Naive thymus-derived CD4-positive, alpha-beta T cell (primary cell): ENCODE measurements at regions of chr16 and their contacts with region 1.

Region 1: DNA sequence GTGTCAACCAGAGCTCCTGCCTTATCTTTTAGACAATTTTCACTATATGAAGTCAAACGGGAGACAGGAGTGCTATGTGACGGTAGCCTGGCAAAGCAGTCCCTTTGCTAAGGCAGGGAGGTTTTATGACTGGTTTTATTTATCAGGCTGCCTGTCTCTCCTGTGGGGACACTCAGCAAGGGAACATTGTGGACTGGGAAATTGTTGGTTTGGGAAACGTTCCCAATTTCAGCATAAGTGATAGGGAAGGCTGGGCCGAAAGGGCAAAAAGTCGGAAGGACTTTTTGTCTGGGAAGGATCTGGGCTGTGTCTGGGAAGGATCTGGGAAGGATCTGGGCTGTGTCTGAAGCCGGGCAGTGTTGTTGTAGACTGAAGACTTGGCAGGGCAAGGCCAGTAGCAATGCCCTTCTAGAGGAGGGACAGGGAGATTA is 211.2 kb downstream of the PARN start:
- DNase-seq: no peak
- ATAC-seq: no peak
- H3K4me3 ChIP-seq: no peak overlapping the region
- H3K4me3 Mint-ChIP-seq: no peak overlapping the region
- H3K27ac ChIP-seq: no peak overlapping the region
- H3K27ac Mint-ChIP-seq: no peak overlapping the region
- H3K4me1 ChIP-seq: no peaks in the 10 kb centered on the region
- H3K4me1 Mint-ChIP-seq: peaks cover 0 to 3% (median 0%) of the 10 kb centered on the region in 7 donors
- H3K27me3 ChIP-seq: no peaks in the 10 kb centered on the region
- H3K27me3 Mint-ChIP-seq: no peaks in the 10 kb centered on the region

Region 2: DNA sequence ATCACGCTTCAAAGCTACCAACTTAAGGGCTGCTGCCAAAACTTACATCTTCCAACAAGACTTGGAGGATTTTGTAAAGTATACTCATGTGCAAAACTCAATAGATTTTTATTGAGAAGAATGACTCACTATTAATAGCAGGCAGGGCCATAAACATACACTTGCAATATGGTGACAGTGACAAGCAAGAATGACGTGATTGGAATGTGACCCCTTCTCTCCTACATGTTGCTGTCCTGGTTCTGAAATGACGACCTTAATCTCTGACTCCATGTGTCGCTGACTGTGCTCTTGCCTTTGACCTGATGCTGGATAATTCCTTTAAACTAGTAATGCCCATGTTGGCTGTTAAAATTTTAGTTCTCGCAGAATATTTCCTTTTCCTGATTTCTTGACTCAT is 36.8 kb after region 1 on chr16:
- CTCF ChIA-PET with region 1: no interaction called
- POLR2A ChIA-PET with region 1: no interaction called
- intact Hi-C with region 1: loop called in 1 of 2 experiments (anchors 5 kb)
- DNase-seq: no peak
- ATAC-seq: no peak
- H3K4me3 ChIP-seq: no peak overlapping the region
- H3K4me3 Mint-ChIP-seq: no peak overlapping the region
- H3K27ac ChIP-seq: no peak overlapping the region
- H3K27ac Mint-ChIP-seq: peak overlapping the region in 1 of 9 donors; percentile 65
- H3K4me1 ChIP-seq: no peaks in the 10 kb centered on the region
- H3K4me1 Mint-ChIP-seq: peaks cover 0 to 11% (median 0%) of the 10 kb centered on the region in 7 donors
- H3K27me3 ChIP-seq: no peaks in the 10 kb centered on the region
- H3K27me3 Mint-ChIP-seq: no peaks in the 10 kb centered on the region

Region 3: GRCh38 chr16:14559809-14560241 is 141.0 kb after region 1 on chr16:
- CTCF ChIA-PET with region 1: no interaction called
- POLR2A ChIA-PET with region 1: no interaction called
- intact Hi-C with region 1: no loop called
- DNase-seq: no peak
- ATAC-seq: no peak
- H3K4me3 ChIP-seq: no peak overlapping the region
- H3K4me3 Mint-ChIP-seq: no peak overlapping the region
- H3K27ac ChIP-seq: no peak overlapping the region
- H3K27ac Mint-ChIP-seq: peak overlapping the region in 2 of 9 donors; percentile 18 to 51
- H3K4me1 ChIP-seq: no peaks in the 10 kb centered on the region
- H3K4me1 Mint-ChIP-seq: peaks cover 3 to 18% (median 9%) of the 10 kb centered on the region in 7 donors
- H3K27me3 ChIP-seq: no peaks in the 10 kb centered on the region
- H3K27me3 Mint-ChIP-seq: no peaks in the 10 kb centered on the region